Ascending aorta (tissue), 2 donors: ENCODE measurements at regions of chr19 and their contacts with region 1.

Region 1: DNA sequence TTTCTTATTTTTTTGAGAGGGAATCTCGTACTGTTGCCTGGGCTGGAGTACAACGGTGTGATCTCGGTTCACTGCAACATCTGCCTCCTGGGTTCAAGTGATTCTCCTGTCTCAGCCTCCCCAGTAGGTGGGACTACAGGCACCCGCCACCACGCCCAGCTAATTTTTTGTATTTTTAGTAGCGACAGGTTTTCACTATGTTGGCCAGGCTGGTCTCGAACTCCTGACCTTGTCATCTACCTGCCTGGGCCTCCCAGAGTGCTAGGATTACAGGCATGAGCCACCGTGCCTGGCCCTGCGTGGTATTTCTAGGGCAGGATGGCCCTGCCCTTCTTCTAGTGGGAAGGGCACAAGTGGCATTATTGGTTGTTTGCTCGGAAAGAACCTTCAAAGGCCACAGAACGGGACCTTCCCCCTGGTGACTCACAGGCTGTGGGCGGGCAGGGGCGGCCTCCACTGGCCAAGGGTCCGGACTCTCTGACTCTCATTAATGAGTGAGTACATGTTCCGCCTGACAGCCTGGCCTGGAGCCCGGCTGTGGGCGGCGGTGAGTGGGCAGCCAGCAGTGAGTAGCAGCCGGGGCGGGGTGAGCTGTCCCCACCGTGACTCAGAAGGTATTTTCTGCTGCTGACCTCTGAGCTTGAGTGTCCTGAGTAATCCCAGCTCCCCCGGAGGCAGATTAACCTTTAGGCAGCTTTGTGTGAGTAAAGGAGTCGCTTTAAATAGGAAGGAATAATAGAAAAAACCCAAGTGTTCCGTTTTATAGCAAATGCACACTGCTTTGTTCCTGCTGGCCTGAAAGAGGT is 5.1 kb downstream of the DOT1L start:
- DNase-seq: peak; percentile 99 to 100
- H3K4me3 ChIP-seq: peak overlapping the region; percentile 31 to 39
- H3K27ac ChIP-seq: peak overlapping the region; percentile 84 to 97
- H3K4me1 ChIP-seq: peaks cover 13 to 46% of the 10 kb centered on the region in 2 donors
- H3K27me3 ChIP-seq: no peaks in the 10 kb centered on the region
- CTCF ChIP-seq: no peak

Region 2: GRCh38 chr19:2050991-2051772 is 117.6 kb before region 1 on chr19 and contains the start of gene MKNK2:
- intact Hi-C with region 1: loop called (anchors 5 kb)
- DNase-seq: peak in 1 of 2 donors; percentile 93
- H3K4me3 ChIP-seq: peak within 1 kb of the TSS; percentile 98
- H3K27ac ChIP-seq: peak within 1 kb of the TSS; percentile 92 to 97
- H3K4me1 ChIP-seq: peaks cover 46% of the 10 kb centered on the region in 2 donors
- H3K27me3 ChIP-seq: no peaks in the 10 kb centered on the region
- CTCF ChIP-seq: peak; percentile 41 to 63 (median 48)
- total RNA-seq, gene MKNK2: 228 TPM

Region 3: GRCh38 chr19:2186071-2186846 is 17.4 kb after region 1 on chr19:
- intact Hi-C with region 1: loop called (anchors 1 kb)
- DNase-seq: peak; percentile 64 to 95
- H3K4me3 ChIP-seq: peak overlapping the region in 1 of 2 donors; percentile 41
- H3K27ac ChIP-seq: peak overlapping the region; percentile 81 to 87
- H3K4me1 ChIP-seq: peaks cover 26 to 57% of the 10 kb centered on the region in 2 donors
- H3K27me3 ChIP-seq: no peaks in the 10 kb centered on the region
- CTCF ChIP-seq: no peak

Region 4: GRCh38 chr19:2269244-2269947 is 100.6 kb after region 1 on chr19:
- intact Hi-C with region 1: loop called (anchors 5 kb)
- DNase-seq: peak; percentile 91 to 99
- H3K4me3 ChIP-seq: peak overlapping the region; percentile 95 to 96
- H3K27ac ChIP-seq: peak overlapping the region; percentile 99 to 100
- H3K4me1 ChIP-seq: peaks cover 17 to 41% of the 10 kb centered on the region in 2 donors
- H3K27me3 ChIP-seq: no peaks in the 10 kb centered on the region
- CTCF ChIP-seq: peak in 1 of 3 experiments; percentile 51

Region 5: DNA sequence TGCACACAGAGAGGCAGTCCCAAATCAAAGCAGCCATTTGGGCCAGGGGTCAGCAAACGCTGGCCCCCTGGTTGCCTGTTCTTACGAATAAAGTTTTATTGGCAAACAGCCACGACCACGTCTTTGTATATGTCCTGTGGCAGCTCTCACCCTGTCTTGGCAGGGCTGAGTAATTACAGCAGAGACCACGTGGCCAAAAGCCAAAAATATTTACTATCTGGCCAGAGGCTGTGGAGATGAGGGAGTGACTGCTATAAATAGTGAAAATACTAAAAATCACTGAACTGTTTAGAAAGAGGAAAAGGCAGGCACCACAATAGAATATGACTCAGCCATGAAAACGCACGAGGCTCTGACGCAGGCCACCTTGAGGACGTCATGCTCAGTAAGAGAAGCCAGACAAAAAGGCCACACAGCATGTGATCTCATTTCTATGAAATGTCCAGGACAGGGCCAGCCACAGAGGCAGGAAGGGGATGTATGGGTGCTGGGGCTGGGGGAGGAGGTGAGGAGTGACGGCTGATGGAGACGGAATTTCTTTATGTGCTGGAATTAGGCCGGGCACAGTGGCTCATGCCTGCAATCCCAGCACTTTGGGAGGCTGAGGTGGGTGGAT is 1282.1 kb after region 1 on chr19:
- intact Hi-C with region 1: loop called (anchors 10 kb)
- DNase-seq: peak; percentile 91 to 98
- H3K4me3 ChIP-seq: no peak overlapping the region
- H3K27ac ChIP-seq: peak overlapping the region; percentile 96 to 99
- H3K4me1 ChIP-seq: peaks cover 0 to 20% of the 10 kb centered on the region in 2 donors
- H3K27me3 ChIP-seq: no peaks in the 10 kb centered on the region
- CTCF ChIP-seq: no peak